ENCODE measurements at regions of chr3 and their contacts with region 1.

Region 1: GRCh38 chr3:18559331-18559842 is 134.2 kb upstream of the SATB1 start:
- DNase-seq: peak; percentile 44
- ATAC-seq: peak; percentile 28
- H3K4me3 Mint-ChIP-seq: no peak overlapping the region
- H3K27ac Mint-ChIP-seq: peak overlapping the region; percentile 73
- H3K4me1 Mint-ChIP-seq: peaks cover 52% of the 10 kb centered on the region
- H3K27me3 Mint-ChIP-seq: no peaks in the 10 kb centered on the region

Region 2: DNA sequence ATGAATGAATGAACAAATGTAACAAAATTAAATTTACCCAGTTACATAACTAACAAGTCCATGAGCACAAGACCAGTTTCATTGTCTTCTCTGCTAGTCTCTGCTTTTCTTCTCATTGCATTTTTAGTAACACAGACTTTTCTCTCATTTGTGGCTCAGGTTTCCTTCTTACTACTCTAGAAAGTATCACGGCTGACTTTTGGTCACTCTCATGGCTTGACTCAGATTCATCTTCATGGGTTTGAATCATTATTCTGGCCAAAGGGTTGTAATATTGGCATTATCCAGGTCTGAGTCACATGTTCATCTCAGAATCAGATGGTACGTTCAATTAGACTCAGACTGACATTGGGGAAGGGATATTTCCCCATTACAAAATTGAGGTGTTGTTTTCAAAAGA is 12.8 kb before region 1 on chr3:
- CTCF ChIA-PET with region 1: interaction called, 12 read pairs
- POLR2A ChIA-PET with region 1: no interaction called
- DNase-seq: no peak
- ATAC-seq: no peak
- H3K4me3 Mint-ChIP-seq: no peak overlapping the region
- H3K27ac Mint-ChIP-seq: no peak overlapping the region
- H3K4me1 Mint-ChIP-seq: peaks cover 3% of the 10 kb centered on the region
- H3K27me3 Mint-ChIP-seq: no peaks in the 10 kb centered on the region

Region 3: GRCh38 chr3:18649666-18650363 is 90.4 kb after region 1 on chr3:
- CTCF ChIA-PET with region 1: interaction called, 19 read pairs
- POLR2A ChIA-PET with region 1: interaction called, 3 read pairs
- DNase-seq: peak; percentile 67
- ATAC-seq: peak; percentile 79
- H3K4me3 Mint-ChIP-seq: peak overlapping the region; percentile 27
- H3K27ac Mint-ChIP-seq: peak overlapping the region; percentile 84
- H3K4me1 Mint-ChIP-seq: peaks cover 42% of the 10 kb centered on the region
- H3K27me3 Mint-ChIP-seq: no peaks in the 10 kb centered on the region

Region 4: GRCh38 chr3:18679238-18679637 is 119.9 kb after region 1 on chr3:
- CTCF ChIA-PET with region 1: interaction called, 18 read pairs
- POLR2A ChIA-PET with region 1: interaction called, 3 read pairs
- DNase-seq: peak; percentile 66
- ATAC-seq: peak; percentile 80
- H3K4me3 Mint-ChIP-seq: peak overlapping the region; percentile 56
- H3K27ac Mint-ChIP-seq: peak overlapping the region; percentile 87
- H3K4me1 Mint-ChIP-seq: peaks cover 68% of the 10 kb centered on the region
- H3K27me3 Mint-ChIP-seq: no peaks in the 10 kb centered on the region

Region 5: GRCh38 chr3:18717598-18717997 is 158.2 kb after region 1 on chr3:
- CTCF ChIA-PET with region 1: interaction called, 58 read pairs
- POLR2A ChIA-PET with region 1: interaction called, 6 read pairs
- DNase-seq: no peak
- ATAC-seq: peak; percentile 11
- H3K4me3 Mint-ChIP-seq: peak overlapping the region; percentile 36
- H3K27ac Mint-ChIP-seq: peak overlapping the region; percentile 95
- H3K4me1 Mint-ChIP-seq: peaks cover 75% of the 10 kb centered on the region
- H3K27me3 Mint-ChIP-seq: no peaks in the 10 kb centered on the region

Region 6: DNA sequence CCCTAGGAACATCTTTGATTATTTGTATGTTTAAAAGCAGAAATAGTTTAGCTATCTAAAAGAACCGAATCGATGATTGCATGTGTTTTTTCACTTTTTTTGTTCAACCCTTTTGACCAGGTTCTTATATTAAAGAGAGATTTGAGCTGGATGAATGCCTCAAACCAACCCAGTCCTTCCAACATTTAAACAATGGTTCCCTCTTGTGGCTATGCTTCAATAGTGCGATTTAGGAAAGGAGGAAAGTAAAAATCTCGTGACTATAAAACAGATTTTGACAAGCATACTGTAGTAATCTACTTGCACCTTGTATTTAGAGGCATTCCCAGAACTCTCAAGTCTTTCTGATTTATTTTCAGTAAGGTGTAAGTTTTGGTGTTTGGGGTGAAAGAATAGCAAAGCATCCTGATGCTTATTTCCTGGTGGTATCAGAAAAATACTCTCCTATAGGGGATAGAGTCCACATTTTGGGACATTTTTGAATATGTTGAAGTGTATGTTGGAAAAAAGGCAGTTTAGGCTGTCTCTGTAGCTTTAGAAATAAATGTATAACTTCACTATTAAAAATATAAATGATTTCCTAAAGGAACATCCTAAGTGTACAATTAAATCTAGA is 429.3 kb after region 1 on chr3:
- CTCF ChIA-PET with region 1: interaction called, 10 read pairs
- POLR2A ChIA-PET with region 1: no interaction called
- DNase-seq: no peak
- ATAC-seq: peak; percentile 64
- H3K4me3 Mint-ChIP-seq: peak overlapping the region; percentile 44
- H3K27ac Mint-ChIP-seq: no peak overlapping the region
- H3K4me1 Mint-ChIP-seq: peaks cover 19% of the 10 kb centered on the region
- H3K27me3 Mint-ChIP-seq: peaks cover 9% of the 10 kb centered on the region